Gastrocnemius medialis (tissue), 4 donors: ENCODE measurements at regions of chr10 and their contacts with region 1.

Region 1: DNA sequence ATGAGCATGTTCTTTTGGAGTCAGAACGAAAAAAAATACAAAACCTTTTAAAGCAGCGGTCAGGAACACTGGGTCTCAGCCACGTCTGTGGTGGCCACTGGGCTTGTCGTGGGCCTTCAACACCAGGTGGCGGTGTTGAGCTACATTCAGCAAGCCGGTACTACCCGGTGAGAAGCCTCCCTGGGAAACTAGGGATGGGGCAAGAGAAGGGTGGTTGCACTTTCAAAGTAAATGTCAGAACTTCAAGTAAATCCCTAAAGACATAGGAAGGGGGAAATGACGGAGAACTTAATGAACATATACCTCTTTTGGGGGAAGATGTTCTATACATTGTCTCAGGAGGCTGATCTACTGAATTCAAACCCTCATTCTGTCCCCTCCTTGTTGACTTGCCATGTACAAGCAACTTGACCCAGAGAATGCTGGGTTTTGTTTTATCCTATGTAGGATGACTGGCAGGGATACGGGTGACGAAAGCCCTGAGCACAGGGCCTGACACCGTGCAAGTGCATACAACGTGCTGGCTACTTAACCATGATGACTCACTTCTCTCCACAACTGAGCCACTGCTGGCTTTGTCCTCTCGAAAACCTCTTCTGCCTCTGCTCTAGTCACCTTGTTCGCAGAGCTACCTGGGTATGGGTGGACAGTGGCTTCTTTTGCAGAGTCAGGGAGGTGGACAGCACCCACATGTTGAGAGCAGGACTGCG is 49.0 kb upstream of the BAMBI start:
- DNase-seq: peak; percentile 40 to 61
- ATAC-seq: peak; percentile 72 to 89
- H3K4me3 ChIP-seq: no peak overlapping the region
- H3K27ac ChIP-seq: no peak overlapping the region
- H3K4me1 ChIP-seq: no peaks in the 10 kb centered on the region
- H3K27me3 ChIP-seq: no peaks in the 10 kb centered on the region
- CTCF ChIP-seq: peak; percentile 48 to 90 (median 72)
- POLR2A ChIP-seq: no peak

Region 2: GRCh38 chr10:28432210-28432676 is 196.1 kb before region 1 on chr10:
- in situ Hi-C with region 1: loop called in 1 of 4 experiments (anchors 25 kb)
- intact Hi-C with region 1: no loop called
- DNase-seq: peak; percentile 27 to 38
- ATAC-seq: peak; percentile 62 to 75
- H3K4me3 ChIP-seq: no peak overlapping the region
- H3K27ac ChIP-seq: no peak overlapping the region
- H3K4me1 ChIP-seq: no peaks in the 10 kb centered on the region
- H3K27me3 ChIP-seq: no peaks in the 10 kb centered on the region
- CTCF ChIP-seq: peak; percentile 52 to 76 (median 65)
- POLR2A ChIP-seq: no peak

Region 3: GRCh38 chr10:28616514-28616913 is 11.8 kb before region 1 on chr10:
- in situ Hi-C with region 1: no loop called
- intact Hi-C with region 1: no loop called
- DNase-seq: no peak
- ATAC-seq: no peak
- H3K4me3 ChIP-seq: no peak overlapping the region
- H3K27ac ChIP-seq: no peak overlapping the region
- H3K4me1 ChIP-seq: no peaks in the 10 kb centered on the region
- H3K27me3 ChIP-seq: no peaks in the 10 kb centered on the region
- CTCF ChIP-seq: no peak
- POLR2A ChIP-seq: no peak